CD8-positive, alpha-beta T cell (primary cell): ENCODE measurements at regions of chr11 and their contacts with region 1.

Region 1: DNA sequence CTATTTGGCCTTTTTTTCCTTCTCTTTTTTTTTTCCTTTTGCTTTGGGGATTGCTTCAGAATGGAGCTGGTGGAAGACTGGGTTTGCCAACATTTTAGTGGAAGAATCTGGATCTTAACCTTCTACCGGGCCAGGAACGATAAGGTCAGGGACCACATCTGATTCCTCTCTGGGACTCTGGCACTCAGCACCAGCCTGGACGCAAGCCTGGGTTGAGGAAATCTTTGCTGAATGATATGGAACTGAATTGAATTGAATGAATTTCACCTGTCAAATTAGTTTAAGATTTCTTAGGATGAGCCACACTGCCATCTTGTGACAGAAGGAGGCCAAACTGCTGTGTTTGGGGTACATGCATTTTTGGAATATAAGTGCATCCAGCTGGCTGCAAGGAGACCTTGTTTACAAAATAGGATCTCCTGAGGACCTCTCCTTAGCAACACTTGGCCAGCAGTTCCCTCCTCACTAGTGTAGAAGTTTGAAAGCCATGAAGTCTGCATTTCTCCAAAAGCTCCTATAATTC is 30.4 kb downstream of the TPBGL start:
- DNase-seq: peak in 3 of 9 experiments; percentile 24 to 61 (median 44)
- ATAC-seq: no peak
- H3K4me3 ChIP-seq: no peak overlapping the region
- H3K4me3 Mint-ChIP-seq: no peak overlapping the region
- H3K27ac ChIP-seq: no peak overlapping the region
- H3K27ac Mint-ChIP-seq: peak overlapping the region; percentile 98
- H3K4me1 ChIP-seq: peaks cover 52% of the 10 kb centered on the region
- H3K4me1 Mint-ChIP-seq: peaks cover 44% of the 10 kb centered on the region
- H3K27me3 ChIP-seq: no peaks in the 10 kb centered on the region
- H3K27me3 Mint-ChIP-seq: no peaks in the 10 kb centered on the region
- CTCF ChIP-seq: peak; percentile 48

Region 2: GRCh38 chr11:74870485-74870884 is 400.5 kb before region 1 on chr11:
- CTCF ChIA-PET with region 1: no interaction called
- POLR2A ChIA-PET with region 1: no interaction called
- intact Hi-C with region 1: no loop called
- DNase-seq: peak in 2 of 9 experiments; percentile 11 to 50
- ATAC-seq: no peak
- H3K4me3 ChIP-seq: no peak overlapping the region
- H3K4me3 Mint-ChIP-seq: no peak overlapping the region
- H3K27ac ChIP-seq: no peak overlapping the region
- H3K27ac Mint-ChIP-seq: no peak overlapping the region
- H3K4me1 ChIP-seq: no peaks in the 10 kb centered on the region
- H3K4me1 Mint-ChIP-seq: no peaks in the 10 kb centered on the region
- H3K27me3 ChIP-seq: no peaks in the 10 kb centered on the region
- H3K27me3 Mint-ChIP-seq: no peaks in the 10 kb centered on the region
- CTCF ChIP-seq: no peak

Region 3: GRCh38 chr11:75031771-75032549 is 239.0 kb before region 1 on chr11:
- CTCF ChIA-PET with region 1: interaction called, 10 read pairs
- POLR2A ChIA-PET with region 1: no interaction called
- intact Hi-C with region 1: no loop called
- DNase-seq: peak; percentile 29 to 72 (median 53)
- ATAC-seq: peak; percentile 56
- H3K4me3 ChIP-seq: no peak overlapping the region
- H3K4me3 Mint-ChIP-seq: no peak overlapping the region
- H3K27ac ChIP-seq: no peak overlapping the region
- H3K27ac Mint-ChIP-seq: no peak overlapping the region
- H3K4me1 ChIP-seq: no peaks in the 10 kb centered on the region
- H3K4me1 Mint-ChIP-seq: no peaks in the 10 kb centered on the region
- H3K27me3 ChIP-seq: no peaks in the 10 kb centered on the region
- H3K27me3 Mint-ChIP-seq: no peaks in the 10 kb centered on the region
- CTCF ChIP-seq: peak; percentile 52

Region 4: DNA sequence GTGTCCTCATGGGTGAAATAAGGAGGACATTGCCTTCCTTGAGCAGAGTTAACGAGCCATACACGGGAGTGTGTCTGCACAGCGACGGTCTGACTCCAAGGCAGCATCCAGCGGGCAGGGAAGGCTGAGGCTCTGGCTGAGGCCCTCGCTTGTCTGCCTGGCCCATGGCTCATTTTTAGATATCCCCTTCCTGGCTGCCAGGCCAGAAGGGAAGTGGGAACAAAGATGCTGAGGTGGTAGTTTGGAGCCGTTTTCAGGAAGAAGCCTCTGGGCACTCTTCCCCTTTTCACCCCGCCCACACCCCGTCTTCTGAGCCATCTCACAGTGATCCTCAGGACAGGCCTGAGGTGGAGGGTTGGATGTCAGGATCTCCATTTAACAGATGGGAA is 123.1 kb before region 1 on chr11:
- CTCF ChIA-PET with region 1: interaction called, 177 read pairs
- POLR2A ChIA-PET with region 1: interaction called, 6 read pairs
- intact Hi-C with region 1: no loop called
- DNase-seq: no peak
- ATAC-seq: no peak
- H3K4me3 ChIP-seq: no peak overlapping the region
- H3K4me3 Mint-ChIP-seq: no peak overlapping the region
- H3K27ac ChIP-seq: no peak overlapping the region
- H3K27ac Mint-ChIP-seq: no peak overlapping the region
- H3K4me1 ChIP-seq: peaks cover 13% of the 10 kb centered on the region
- H3K4me1 Mint-ChIP-seq: peaks cover 15% of the 10 kb centered on the region
- H3K27me3 ChIP-seq: no peaks in the 10 kb centered on the region
- H3K27me3 Mint-ChIP-seq: peaks cover 7% of the 10 kb centered on the region
- CTCF ChIP-seq: no peak

Region 5: GRCh38 chr11:75351791-75352587 is 81.0 kb after region 1 on chr11:
- CTCF ChIA-PET with region 1: interaction called, 9 read pairs
- POLR2A ChIA-PET with region 1: interaction called, 18 read pairs
- intact Hi-C with region 1: loop called in 1 of 2 experiments (anchors 5 kb)
- DNase-seq: peak; percentile 30 to 83 (median 59)
- ATAC-seq: peak; percentile 67
- H3K4me3 ChIP-seq: peak overlapping the region; percentile 68 to 95
- H3K4me3 Mint-ChIP-seq: peak overlapping the region; percentile 93
- H3K27ac ChIP-seq: peak overlapping the region; percentile 63 to 74
- H3K27ac Mint-ChIP-seq: peak overlapping the region; percentile 89
- H3K4me1 ChIP-seq: peaks cover 60% of the 10 kb centered on the region
- H3K4me1 Mint-ChIP-seq: peaks cover 64% of the 10 kb centered on the region
- H3K27me3 ChIP-seq: no peaks in the 10 kb centered on the region
- H3K27me3 Mint-ChIP-seq: no peaks in the 10 kb centered on the region
- CTCF ChIP-seq: no peak

Region 6: GRCh38 chr11:76120513-76121101 is 849.6 kb after region 1 on chr11:
- CTCF ChIA-PET with region 1: no interaction called
- POLR2A ChIA-PET with region 1: no interaction called
- intact Hi-C with region 1: no loop called
- DNase-seq: no peak
- ATAC-seq: no peak
- H3K4me3 ChIP-seq: no peak overlapping the region
- H3K4me3 Mint-ChIP-seq: no peak overlapping the region
- H3K27ac ChIP-seq: no peak overlapping the region
- H3K27ac Mint-ChIP-seq: no peak overlapping the region
- H3K4me1 ChIP-seq: no peaks in the 10 kb centered on the region
- H3K4me1 Mint-ChIP-seq: no peaks in the 10 kb centered on the region
- H3K27me3 ChIP-seq: no peaks in the 10 kb centered on the region
- H3K27me3 Mint-ChIP-seq: no peaks in the 10 kb centered on the region
- CTCF ChIP-seq: no peak

Region 7: GRCh38 chr11:77019976-77020595 is 1749.1 kb after region 1 on chr11:
- CTCF ChIA-PET with region 1: no interaction called
- POLR2A ChIA-PET with region 1: no interaction called
- intact Hi-C with region 1: no loop called
- DNase-seq: no peak
- ATAC-seq: no peak
- H3K4me3 ChIP-seq: no peak overlapping the region
- H3K4me3 Mint-ChIP-seq: no peak overlapping the region
- H3K27ac ChIP-seq: no peak overlapping the region
- H3K27ac Mint-ChIP-seq: no peak overlapping the region
- H3K4me1 ChIP-seq: no peaks in the 10 kb centered on the region
- H3K4me1 Mint-ChIP-seq: no peaks in the 10 kb centered on the region
- H3K27me3 ChIP-seq: no peaks in the 10 kb centered on the region
- H3K27me3 Mint-ChIP-seq: no peaks in the 10 kb centered on the region
- CTCF ChIP-seq: no peak